Dorsolateral prefrontal cortex (tissue), 120 donors: ENCODE measurements at regions of chr5 and their contacts with region 1.

Region 1: DNA sequence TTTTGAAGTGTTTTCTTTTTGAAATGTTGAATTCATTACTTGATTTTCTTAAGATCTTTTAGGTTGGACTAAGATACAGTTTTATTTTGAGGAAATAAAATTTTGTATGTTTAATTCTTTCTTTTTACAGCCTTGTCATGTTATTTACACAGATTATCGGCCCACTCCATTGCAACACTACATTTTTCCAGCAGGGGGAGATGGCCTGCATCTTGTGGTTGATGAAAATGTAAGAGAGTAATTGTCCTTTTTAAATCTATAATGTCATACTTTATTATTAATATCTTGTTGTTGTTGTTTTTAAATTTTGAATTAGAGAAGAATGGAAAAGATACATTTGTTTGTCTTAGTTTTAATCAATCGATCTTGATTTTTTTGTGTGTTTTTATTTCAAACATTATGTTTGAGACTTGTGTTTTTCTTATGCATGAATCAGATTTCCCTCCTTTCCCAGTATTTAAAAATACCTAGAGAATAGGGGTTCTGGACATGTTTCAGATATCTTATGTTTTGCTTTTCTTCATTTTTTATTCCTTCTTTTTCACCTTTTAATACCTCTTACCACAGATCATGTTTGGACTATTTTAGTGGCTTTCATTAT is 36.7 kb downstream of the MTREX start:
- DNase-seq: peak in 9 of 10 donors; percentile 47 to 90 (median 56)
- H3K4me3 ChIP-seq: peak overlapping the region in 1 of 59 donors; percentile 3
- H3K27ac ChIP-seq: peak overlapping the region in 33 of 59 donors; percentile 2 to 75 (median 36)
- H3K27me3 ChIP-seq: no peaks in the 10 kb centered on the region
- CTCF ChIP-seq: peak; percentile 79 to 98 (median 91)

Region 2: DNA sequence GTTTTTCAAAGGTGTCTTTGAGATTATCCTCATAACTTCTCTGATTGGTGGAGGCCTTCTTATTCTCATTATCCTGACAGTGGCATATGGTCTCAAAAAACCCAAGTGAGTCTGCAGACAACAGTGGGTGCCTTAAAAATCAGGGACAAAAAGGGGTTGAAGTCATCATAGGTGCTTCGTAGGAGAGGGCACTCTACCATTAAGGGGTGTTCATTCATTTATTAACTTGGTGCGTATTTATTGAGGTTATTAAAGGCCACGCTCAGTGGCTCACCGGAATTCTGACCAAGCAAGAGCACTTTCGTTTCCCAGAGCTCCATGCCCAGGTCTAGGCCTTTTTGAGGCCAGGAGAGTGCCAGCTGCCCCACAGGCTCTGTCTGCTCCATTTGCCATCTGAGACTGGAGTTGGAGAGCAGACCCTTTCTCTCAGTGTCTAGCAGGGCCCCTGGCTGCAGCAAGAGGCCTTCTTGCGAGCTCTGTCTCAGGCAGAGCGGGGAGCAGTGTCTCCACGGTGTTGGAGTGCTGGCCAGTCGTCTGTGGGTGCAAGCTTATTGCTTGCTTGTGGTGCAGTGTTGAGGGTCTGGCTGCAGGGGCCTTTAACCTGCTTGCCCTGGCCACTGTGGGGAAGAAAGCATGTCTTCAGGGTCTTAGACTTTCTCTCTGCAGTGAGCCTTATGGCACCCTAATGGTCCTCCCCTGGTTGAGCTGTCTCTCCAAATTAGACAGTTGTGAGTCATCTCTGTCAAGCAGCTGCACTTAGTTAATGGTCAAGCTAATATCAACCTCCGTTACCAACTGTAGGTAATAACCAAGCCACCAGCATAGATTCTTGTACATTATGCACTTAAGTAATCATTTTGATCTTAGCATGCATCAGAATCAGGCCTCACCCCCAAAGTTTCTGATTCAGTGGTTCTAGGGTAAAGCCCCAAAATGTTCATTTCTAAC is 569.2 kb after region 1 on chr5:
- intact Hi-C with region 1: loop called in 1 of 2 experiments (anchors 10 kb)
- DNase-seq: no peak
- H3K4me3 ChIP-seq: no peak overlapping the region
- H3K27ac ChIP-seq: no peak overlapping the region
- H3K27me3 ChIP-seq: no peaks in the 10 kb centered on the region
- CTCF ChIP-seq: no peak